Dorsolateral prefrontal cortex (tissue), 120 donors: ENCODE measurements at regions of chr1 and their contacts with region 1.

Region 1: GRCh38 chr1:150561974-150562445 is 12.8 kb downstream of the ADAMTSL4 start:
- DNase-seq: peak in 9 of 10 donors; percentile 38 to 84 (median 74)
- H3K4me3 ChIP-seq: peak overlapping the region; percentile 24 to 75 (median 61)
- H3K27ac ChIP-seq: peak overlapping the region; percentile 74 to 100 (median 98)
- H3K27me3 ChIP-seq: no peaks in the 10 kb centered on the region
- CTCF ChIP-seq: no peak

Region 2: GRCh38 chr1:150083907-150084306 is 478.1 kb before region 1 on chr1:
- intact Hi-C with region 1: no loop called
- DNase-seq: no peak
- H3K4me3 ChIP-seq: no peak overlapping the region
- H3K27ac ChIP-seq: no peak overlapping the region
- H3K27me3 ChIP-seq: no peaks in the 10 kb centered on the region
- CTCF ChIP-seq: no peak

Region 3: GRCh38 chr1:150578965-150579798 is 17.2 kb after region 1 on chr1 and contains the start of gene MCL1:
- intact Hi-C with region 1: loop called (anchors 1 to 2 kb)
- DNase-seq: peak; percentile 72 to 94 (median 92)
- H3K4me3 ChIP-seq: peak within 1 kb of the TSS; percentile 59 to 99 (median 94)
- H3K27ac ChIP-seq: peak within 1 kb of the TSS; percentile 89 to 100 (median 98)
- H3K27me3 ChIP-seq: no peaks in the 10 kb centered on the region
- CTCF ChIP-seq: peak in 38 of 56 donors; percentile 13 to 61 (median 38)
- total RNA-seq, gene MCL1: 43.4 to 130 (median 70.6) TPM

Region 4: GRCh38 chr1:150621497-150622302 is 59.7 kb after region 1 on chr1:
- intact Hi-C with region 1: loop called (anchors 2 to 5 kb)
- DNase-seq: peak in 2 of 10 donors; percentile 50 to 56
- H3K4me3 ChIP-seq: no peak overlapping the region
- H3K27ac ChIP-seq: peak overlapping the region in 52 of 59 donors; percentile 1 to 84 (median 65)
- H3K27me3 ChIP-seq: no peaks in the 10 kb centered on the region
- CTCF ChIP-seq: peak; percentile 48 to 76 (median 64)

Region 5: DNA sequence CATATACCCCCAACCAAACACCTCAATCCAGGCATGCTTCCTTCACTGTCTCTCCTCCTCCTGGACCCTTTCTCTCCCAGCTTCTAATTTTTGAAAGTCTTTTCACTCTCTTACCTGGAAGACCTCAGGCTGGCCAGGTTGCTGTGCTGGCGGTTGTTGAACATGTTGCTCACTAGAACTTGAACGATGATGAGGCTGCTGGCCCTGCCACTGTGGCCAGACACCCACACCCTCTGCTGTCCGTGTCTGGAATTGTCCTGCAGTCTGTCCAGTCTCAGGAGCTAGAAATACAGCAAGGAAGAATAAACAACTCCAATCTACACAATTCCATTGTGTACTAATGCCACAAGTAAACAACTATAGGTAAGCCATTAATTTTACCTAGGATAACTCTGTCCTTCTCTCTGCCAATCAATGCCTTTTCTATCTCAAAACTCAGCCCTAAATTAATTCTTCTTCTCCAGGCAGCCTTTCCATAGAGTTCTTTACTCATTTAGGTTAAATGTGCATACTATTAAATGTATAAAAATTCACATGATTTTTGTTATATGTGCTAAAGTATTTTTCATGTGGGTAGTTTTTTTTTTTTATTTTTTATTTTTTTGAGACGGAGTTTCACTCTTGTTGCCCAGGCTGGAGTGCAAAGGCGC is 251.2 kb after region 1 on chr1:
- intact Hi-C with region 1: loop called in 1 of 2 experiments (anchors 5 kb)
- DNase-seq: peak in 5 of 10 donors; percentile 12 to 55 (median 37)
- H3K4me3 ChIP-seq: no peak overlapping the region
- H3K27ac ChIP-seq: peak overlapping the region in 7 of 59 donors; percentile 3 to 53 (median 17)
- H3K27me3 ChIP-seq: no peaks in the 10 kb centered on the region
- CTCF ChIP-seq: peak in 51 of 56 donors; percentile 26 to 62 (median 46)

Region 6: GRCh38 chr1:150890033-150890416 is 328.0 kb after region 1 on chr1:
- intact Hi-C with region 1: no loop called
- DNase-seq: no peak
- H3K4me3 ChIP-seq: no peak overlapping the region
- H3K27ac ChIP-seq: no peak overlapping the region
- H3K27me3 ChIP-seq: peaks cover 0 to 7% (median 0%) of the 10 kb centered on the region in 45 donors
- CTCF ChIP-seq: no peak

Region 7: DNA sequence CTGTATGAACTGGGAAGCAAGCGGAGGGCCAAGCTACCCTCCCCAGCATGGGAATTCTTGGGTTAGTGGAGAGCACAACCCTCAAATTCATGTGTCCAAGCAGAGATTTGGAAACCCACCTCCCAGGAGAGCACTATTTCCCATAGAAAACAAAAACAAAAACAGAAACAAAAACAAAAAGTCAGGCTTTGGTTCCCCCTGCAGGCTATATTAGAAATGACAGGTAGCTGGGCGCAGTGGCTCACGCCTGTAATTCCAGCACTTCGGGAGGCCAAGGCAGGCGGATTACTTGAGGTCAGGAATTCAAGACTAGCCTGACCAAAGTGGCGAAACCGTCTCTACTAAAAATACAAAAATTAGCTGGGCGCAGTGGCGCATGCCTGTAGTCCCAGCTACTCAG is 433.9 kb after region 1 on chr1:
- intact Hi-C with region 1: loop called (anchors 10 kb)
- DNase-seq: peak in 3 of 10 donors; percentile 44 to 50 (median 46)
- H3K4me3 ChIP-seq: peak overlapping the region in 7 of 59 donors; percentile 0 to 27 (median 15)
- H3K27ac ChIP-seq: peak overlapping the region in 56 of 59 donors; percentile 10 to 95 (median 72)
- H3K27me3 ChIP-seq: no peaks in the 10 kb centered on the region
- CTCF ChIP-seq: peak; percentile 72 to 93 (median 87)